ENCODE measurements at regions of chr2 and their contacts with region 1.

Region 1: DNA sequence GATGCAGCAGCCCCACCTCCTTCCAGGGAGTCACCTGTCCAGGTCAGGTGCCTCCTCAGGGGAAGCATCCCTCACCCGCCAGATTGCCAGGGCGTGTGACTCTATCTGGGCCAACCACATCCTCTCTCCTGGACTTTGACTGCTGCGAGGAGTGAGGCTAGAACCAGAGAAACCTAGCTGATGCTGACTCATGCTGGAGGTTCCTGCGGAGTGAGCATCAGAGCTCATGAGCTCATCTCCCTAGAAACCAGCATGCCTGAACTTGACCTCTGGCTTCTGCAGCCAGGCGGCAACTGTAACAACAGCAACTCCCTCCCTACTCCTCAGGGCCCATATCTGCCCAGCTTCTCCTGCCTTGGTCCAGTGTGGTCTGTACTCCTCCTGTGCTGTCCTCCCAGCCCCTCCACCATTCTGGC is 28.3 kb upstream of the NT5DC4 start:
- DNase-seq: peak; percentile 81
- ATAC-seq: peak; percentile 92
- H3K4me3 Mint-ChIP-seq: peak overlapping the region; percentile 7
- H3K27ac Mint-ChIP-seq: peak overlapping the region; percentile 87
- H3K4me1 Mint-ChIP-seq: peaks cover 33% of the 10 kb centered on the region
- H3K27me3 Mint-ChIP-seq: no peaks in the 10 kb centered on the region

Region 2: GRCh38 chr2:112626604-112627059 is 65.9 kb before region 1 on chr2:
- CTCF ChIA-PET with region 1: interaction called, 36 read pairs
- POLR2A ChIA-PET with region 1: no interaction called
- intact Hi-C with region 1: loop called (anchors 1 to 2 kb)
- DNase-seq: peak; percentile 81
- ATAC-seq: peak; percentile 53
- H3K4me3 Mint-ChIP-seq: peak overlapping the region; percentile 50
- H3K27ac Mint-ChIP-seq: peak overlapping the region; percentile 82
- H3K4me1 Mint-ChIP-seq: peaks cover 65% of the 10 kb centered on the region
- H3K27me3 Mint-ChIP-seq: peaks cover 2% of the 10 kb centered on the region

Region 3: DNA sequence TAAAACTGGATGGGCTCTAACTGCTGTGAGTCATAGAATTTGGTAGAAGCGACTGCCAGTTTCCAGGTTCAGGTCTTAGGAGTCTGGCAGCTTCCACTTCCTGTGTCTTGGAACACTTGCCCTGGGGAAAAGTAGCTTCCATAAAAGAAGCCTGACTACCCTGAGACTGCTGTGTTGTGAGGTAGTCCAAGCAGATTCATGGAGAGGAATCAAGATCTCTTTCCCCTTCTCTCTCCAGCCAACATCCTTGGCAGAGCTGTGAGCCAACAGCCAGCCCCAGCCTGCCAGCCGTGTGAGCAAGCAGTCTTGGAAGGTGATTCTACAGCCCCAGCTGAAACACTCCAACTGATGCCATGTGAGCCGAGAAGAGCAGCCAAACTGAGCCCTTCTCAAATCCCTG is 13.0 kb before region 1 on chr2:
- CTCF ChIA-PET with region 1: interaction called, 10 read pairs
- POLR2A ChIA-PET with region 1: no interaction called
- intact Hi-C with region 1: no loop called
- DNase-seq: no peak
- ATAC-seq: no peak
- H3K4me3 Mint-ChIP-seq: no peak overlapping the region
- H3K27ac Mint-ChIP-seq: no peak overlapping the region
- H3K4me1 Mint-ChIP-seq: peaks cover 5% of the 10 kb centered on the region
- H3K27me3 Mint-ChIP-seq: peaks cover 1% of the 10 kb centered on the region

Region 4: GRCh38 chr2:112706170-112706664 is 13.7 kb after region 1 on chr2:
- CTCF ChIA-PET with region 1: interaction called, 5 read pairs
- POLR2A ChIA-PET with region 1: interaction called, 19 read pairs
- intact Hi-C with region 1: no loop called
- DNase-seq: peak; percentile 78
- ATAC-seq: peak; percentile 93
- H3K4me3 Mint-ChIP-seq: no peak overlapping the region
- H3K27ac Mint-ChIP-seq: no peak overlapping the region
- H3K4me1 Mint-ChIP-seq: peaks cover 31% of the 10 kb centered on the region
- H3K27me3 Mint-ChIP-seq: peaks cover 11% of the 10 kb centered on the region

Region 5: DNA sequence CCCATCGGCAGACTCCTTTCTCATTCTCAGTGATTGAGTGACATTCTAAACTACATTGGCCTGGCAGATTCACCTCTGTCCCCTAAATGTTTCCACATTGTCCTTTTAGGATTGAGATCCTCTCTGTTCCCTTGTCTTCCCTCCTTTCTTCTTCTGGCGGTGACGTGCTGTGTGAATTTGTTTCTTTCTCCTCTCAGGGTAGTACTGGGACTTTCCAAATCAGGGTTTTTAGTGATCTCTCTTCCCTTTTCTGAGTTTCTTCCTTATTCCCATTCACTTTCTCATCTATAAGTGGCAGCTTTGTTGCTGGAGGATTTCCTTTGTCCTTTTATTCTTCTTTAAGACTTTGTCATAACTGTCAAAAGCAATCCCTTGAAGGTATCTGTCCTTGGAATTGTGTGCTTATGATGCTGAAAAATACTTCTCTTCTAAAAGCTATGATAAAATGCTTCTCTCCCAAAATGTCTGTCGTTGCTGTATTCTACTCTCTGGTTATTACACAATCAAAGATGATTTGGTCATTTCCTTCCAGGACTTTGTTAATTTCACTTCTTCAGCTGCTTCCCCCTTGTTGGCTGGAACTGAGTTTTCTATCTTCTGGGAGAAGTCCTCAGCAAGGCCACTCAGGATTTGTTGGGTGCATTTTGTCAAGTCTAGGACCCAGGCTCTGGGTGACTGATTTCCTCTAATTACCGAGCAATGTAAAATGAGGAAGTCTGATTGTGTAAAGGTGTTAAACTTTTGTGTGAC is 149.0 kb after region 1 on chr2:
- CTCF ChIA-PET with region 1: no interaction called
- POLR2A ChIA-PET with region 1: no interaction called
- intact Hi-C with region 1: no loop called
- DNase-seq: no peak
- ATAC-seq: no peak
- H3K4me3 Mint-ChIP-seq: no peak overlapping the region
- H3K27ac Mint-ChIP-seq: no peak overlapping the region
- H3K4me1 Mint-ChIP-seq: no peaks in the 10 kb centered on the region
- H3K27me3 Mint-ChIP-seq: peaks cover 17% of the 10 kb centered on the region

Measured in activated CD4-positive, alpha-beta T cell treated with anti-CD3 and anti-CD28 coated beads for 36 hours (primary cell).